GM13977 (cell line): ENCODE measurements at regions of chr18 and their contacts with region 1.

Region 1: GRCh38 chr18:10689236-10690034 is 163.6 kb downstream of the NAPG start:
- DNase-seq: no peak
- CTCF ChIP-seq: no peak

Region 2: GRCh38 chr18:10304853-10305252 is 384.6 kb before region 1 on chr18:
- in situ Hi-C with region 1: no loop called
- DNase-seq: no peak
- CTCF ChIP-seq: no peak

Region 3: DNA sequence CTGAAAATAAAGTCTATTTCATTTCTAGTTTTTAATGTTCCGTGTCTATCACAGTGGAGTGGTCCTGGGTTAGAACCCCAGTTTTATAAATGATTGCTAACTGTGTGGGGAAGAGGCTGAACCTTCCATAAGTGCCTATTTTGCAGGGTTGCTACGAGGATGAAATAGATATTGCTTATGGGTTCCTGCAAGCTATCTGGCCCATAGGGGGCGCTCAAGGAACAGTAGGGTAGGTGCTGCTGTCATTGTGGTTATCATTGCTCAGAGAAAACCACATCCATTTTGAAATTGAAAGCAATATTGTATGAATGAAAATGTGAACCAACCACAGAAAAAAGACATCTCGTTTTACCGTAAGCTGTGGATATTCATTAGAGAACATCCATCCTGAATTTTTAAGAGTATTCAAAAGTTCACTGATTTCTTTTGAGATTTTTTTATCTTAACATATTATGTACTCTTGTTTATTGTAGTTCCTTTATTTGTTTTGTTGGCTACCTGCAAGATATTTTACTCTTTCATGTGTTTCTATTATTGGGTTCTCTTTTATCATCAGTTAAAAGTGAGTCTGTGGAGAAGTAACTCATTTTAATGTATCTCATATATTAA is 98.0 kb after region 1 on chr18:
- in situ Hi-C with region 1: loop called (anchors 25 kb)
- DNase-seq: peak; percentile 73
- CTCF ChIP-seq: peak; percentile 85